Left ventricle myocardium inferior (tissue), 1 donor: ENCODE measurements at regions of chr13 and their contacts with region 1.

Region 1: DNA sequence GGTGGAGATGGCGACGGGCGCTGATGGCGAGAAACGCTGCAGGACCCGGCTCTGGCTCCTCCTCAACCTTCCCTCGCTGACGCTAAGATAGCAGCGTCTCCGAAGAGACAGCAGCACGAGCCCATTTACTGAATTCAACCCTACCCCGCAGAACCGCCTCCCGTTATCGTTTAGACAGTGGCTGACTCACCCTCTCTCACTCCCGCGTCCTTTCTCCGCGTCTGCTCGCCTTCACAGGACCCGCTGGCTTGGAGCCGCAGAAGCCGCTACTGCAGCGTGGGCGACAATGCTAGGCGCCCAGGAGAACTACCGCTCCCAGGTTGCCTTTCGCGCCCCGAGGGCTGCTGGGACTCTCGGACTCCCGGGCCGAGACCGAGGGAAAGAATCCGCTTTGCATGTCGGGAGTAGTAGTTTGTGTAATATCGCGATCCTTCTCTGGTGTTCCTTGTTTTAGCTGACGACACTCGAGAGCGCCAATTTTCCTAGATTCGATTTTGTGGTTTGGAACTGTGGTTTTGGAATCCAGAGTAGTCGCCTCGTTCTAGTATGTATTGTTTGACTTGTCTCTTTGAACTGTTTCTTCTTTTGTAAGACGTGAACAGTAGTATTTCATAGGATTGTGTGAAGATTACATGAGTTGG is at the start of gene KBTBD6:
- DNase-seq: peak; percentile 96
- H3K4me3 ChIP-seq: peak within 1 kb of the TSS; percentile 87
- H3K27ac ChIP-seq: peak within 1 kb of the TSS; percentile 93
- H3K4me1 ChIP-seq: peaks cover 58% of the 10 kb centered on the region
- H3K27me3 ChIP-seq: no peaks in the 10 kb centered on the region
- CTCF ChIP-seq: no peak
- total RNA-seq, gene KBTBD6: 5.3 TPM

Region 2: GRCh38 chr13:40974460-40975407 is 157.9 kb before region 1 on chr13:
- intact Hi-C with region 1: no loop called
- DNase-seq: no peak
- H3K4me3 ChIP-seq: no peak overlapping the region
- H3K27ac ChIP-seq: no peak overlapping the region
- H3K4me1 ChIP-seq: peaks cover 100% of the 10 kb centered on the region
- H3K27me3 ChIP-seq: no peaks in the 10 kb centered on the region
- CTCF ChIP-seq: peak; percentile 59

Region 3: GRCh38 chr13:41193919-41194824 is 61.5 kb after region 1 on chr13 and contains the start of gene KBTBD7:
- intact Hi-C with region 1: loop called (anchors 5 kb)
- DNase-seq: peak; percentile 94
- H3K4me3 ChIP-seq: peak within 1 kb of the TSS; percentile 90
- H3K27ac ChIP-seq: peak within 1 kb of the TSS; percentile 92
- H3K4me1 ChIP-seq: peaks cover 36% of the 10 kb centered on the region
- H3K27me3 ChIP-seq: no peaks in the 10 kb centered on the region
- CTCF ChIP-seq: no peak
- total RNA-seq, gene KBTBD7: 5.2 TPM